ENCODE measurements at regions of chr6 and their contacts with region 1.

Region 1: GRCh38 chr6:132279592-132280139 is 121.6 kb downstream of the MOXD1 start:
- DNase-seq: peak; percentile 45 to 72 (median 65)
- H3K4me3 ChIP-seq: peak overlapping the region; percentile 54
- H3K4me3 Mint-ChIP-seq: peak overlapping the region in 6 of 7 donors; percentile 74 to 89 (median 81)
- H3K27ac ChIP-seq: no peak overlapping the region
- H3K27ac Mint-ChIP-seq: peak overlapping the region in 2 of 8 donors; percentile 31 to 58
- H3K4me1 ChIP-seq: no peaks in the 10 kb centered on the region
- H3K4me1 Mint-ChIP-seq: peaks cover 0 to 4% (median 0%) of the 10 kb centered on the region in 3 donors
- H3K27me3 ChIP-seq: no peaks in the 10 kb centered on the region
- H3K27me3 Mint-ChIP-seq: peaks cover 9 to 39% of the 10 kb centered on the region in 2 donors

Region 2: GRCh38 chr6:132259070-132259469 is 20.6 kb before region 1 on chr6:
- CTCF ChIA-PET with region 1: interaction called, 12 read pairs
- POLR2A ChIA-PET with region 1: no interaction called
- DNase-seq: no peak
- H3K4me3 ChIP-seq: no peak overlapping the region
- H3K4me3 Mint-ChIP-seq: no peak overlapping the region
- H3K27ac ChIP-seq: no peak overlapping the region
- H3K27ac Mint-ChIP-seq: no peak overlapping the region
- H3K4me1 ChIP-seq: no peaks in the 10 kb centered on the region
- H3K4me1 Mint-ChIP-seq: no peaks in the 10 kb centered on the region
- H3K27me3 ChIP-seq: no peaks in the 10 kb centered on the region
- H3K27me3 Mint-ChIP-seq: peaks cover 6 to 27% of the 10 kb centered on the region in 2 donors

Region 3: DNA sequence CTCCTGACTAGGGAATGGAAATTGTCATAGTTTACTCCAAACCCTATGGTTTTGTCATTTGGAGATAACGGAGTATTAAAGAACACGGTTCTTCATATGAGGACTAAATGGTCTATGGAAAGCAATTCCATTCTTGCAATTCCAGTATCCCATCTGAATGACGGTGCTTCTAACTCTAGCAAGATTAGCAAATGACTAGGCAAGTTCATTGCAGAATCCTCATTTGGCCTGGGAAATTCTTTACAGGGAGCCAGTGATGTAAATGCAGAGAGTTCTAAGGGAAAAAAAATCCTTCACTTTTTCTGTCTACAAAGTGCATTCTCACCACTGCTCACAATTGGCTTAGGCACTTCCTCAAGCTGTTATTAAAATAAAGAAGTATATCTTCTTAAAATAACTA is 10.1 kb after region 1 on chr6:
- CTCF ChIA-PET with region 1: interaction called, 40 read pairs
- POLR2A ChIA-PET with region 1: no interaction called
- DNase-seq: no peak
- H3K4me3 ChIP-seq: no peak overlapping the region
- H3K4me3 Mint-ChIP-seq: no peak overlapping the region
- H3K27ac ChIP-seq: no peak overlapping the region
- H3K27ac Mint-ChIP-seq: no peak overlapping the region
- H3K4me1 ChIP-seq: no peaks in the 10 kb centered on the region
- H3K4me1 Mint-ChIP-seq: no peaks in the 10 kb centered on the region
- H3K27me3 ChIP-seq: peaks cover 4% of the 10 kb centered on the region
- H3K27me3 Mint-ChIP-seq: peaks cover 2 to 21% of the 10 kb centered on the region in 2 donors

Region 4: DNA sequence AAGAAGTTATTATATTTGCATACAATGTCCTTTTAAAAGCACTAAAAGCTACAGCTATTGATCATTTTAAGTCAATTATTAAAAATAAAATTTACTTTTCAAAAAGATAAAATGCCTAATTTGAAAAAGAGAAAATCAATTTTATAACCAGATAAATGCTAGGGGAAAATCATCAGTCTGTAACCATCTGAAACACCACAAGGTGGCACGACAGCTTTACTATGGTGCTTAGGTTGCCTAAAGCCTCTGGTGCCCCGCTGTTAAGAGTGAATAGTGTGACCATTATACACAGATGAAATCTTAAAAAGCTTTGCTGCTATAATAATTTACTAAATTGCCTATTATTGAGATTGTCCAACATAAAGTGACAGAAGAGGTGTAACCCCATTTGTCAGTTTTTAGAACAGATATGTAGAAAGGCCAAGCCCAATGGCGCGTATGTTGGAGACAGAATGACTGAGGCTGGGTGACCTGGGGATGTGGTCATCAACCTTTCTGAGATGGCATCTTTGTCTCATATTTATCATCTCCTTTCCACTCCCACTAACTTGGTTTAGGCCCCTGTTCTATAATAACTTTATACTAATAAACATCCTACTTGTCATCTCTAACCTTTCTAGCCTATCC is 20.8 kb after region 1 on chr6:
- CTCF ChIA-PET with region 1: interaction called, 40 read pairs
- POLR2A ChIA-PET with region 1: no interaction called
- DNase-seq: no peak
- H3K4me3 ChIP-seq: no peak overlapping the region
- H3K4me3 Mint-ChIP-seq: no peak overlapping the region
- H3K27ac ChIP-seq: no peak overlapping the region
- H3K27ac Mint-ChIP-seq: no peak overlapping the region
- H3K4me1 ChIP-seq: no peaks in the 10 kb centered on the region
- H3K4me1 Mint-ChIP-seq: no peaks in the 10 kb centered on the region
- H3K27me3 ChIP-seq: no peaks in the 10 kb centered on the region
- H3K27me3 Mint-ChIP-seq: peaks cover 3 to 18% of the 10 kb centered on the region in 2 donors

Region 5: DNA sequence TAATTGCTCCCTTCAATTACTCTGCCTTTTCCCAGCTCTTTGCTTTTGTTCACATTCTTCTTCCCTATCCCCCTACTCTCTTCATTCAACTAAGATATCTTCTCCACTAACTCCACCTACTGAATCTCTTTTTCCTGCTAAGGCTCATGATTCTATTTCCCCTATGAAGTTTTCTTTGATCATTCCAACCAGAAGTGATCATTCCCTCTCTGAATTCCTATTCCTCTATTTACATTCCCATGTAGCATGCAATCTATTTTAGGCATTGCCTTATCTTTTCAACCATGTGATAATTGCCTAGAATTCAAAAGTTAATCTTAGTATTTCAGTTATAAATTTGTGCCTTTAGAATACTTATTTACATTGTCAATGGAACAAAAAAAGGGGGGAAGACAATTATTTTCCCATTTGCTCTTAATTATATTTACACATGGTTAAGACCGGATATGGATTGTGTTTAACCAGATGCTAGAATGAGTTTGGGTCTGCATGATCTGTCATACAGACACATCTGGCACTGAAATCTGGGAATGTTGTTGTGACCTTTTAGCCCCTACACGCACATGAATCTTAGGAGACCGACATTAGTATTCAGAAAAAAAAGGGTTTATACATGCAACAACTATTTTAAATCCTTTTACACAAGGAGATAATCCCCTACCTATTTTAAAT is 100.8 kb after region 1 on chr6:
- CTCF ChIA-PET with region 1: no interaction called
- POLR2A ChIA-PET with region 1: no interaction called
- DNase-seq: no peak
- H3K4me3 ChIP-seq: no peak overlapping the region
- H3K4me3 Mint-ChIP-seq: no peak overlapping the region
- H3K27ac ChIP-seq: no peak overlapping the region
- H3K27ac Mint-ChIP-seq: no peak overlapping the region
- H3K4me1 ChIP-seq: no peaks in the 10 kb centered on the region
- H3K4me1 Mint-ChIP-seq: no peaks in the 10 kb centered on the region
- H3K27me3 ChIP-seq: no peaks in the 10 kb centered on the region
- H3K27me3 Mint-ChIP-seq: peaks cover 15 to 43% of the 10 kb centered on the region in 2 donors

Region 6: DNA sequence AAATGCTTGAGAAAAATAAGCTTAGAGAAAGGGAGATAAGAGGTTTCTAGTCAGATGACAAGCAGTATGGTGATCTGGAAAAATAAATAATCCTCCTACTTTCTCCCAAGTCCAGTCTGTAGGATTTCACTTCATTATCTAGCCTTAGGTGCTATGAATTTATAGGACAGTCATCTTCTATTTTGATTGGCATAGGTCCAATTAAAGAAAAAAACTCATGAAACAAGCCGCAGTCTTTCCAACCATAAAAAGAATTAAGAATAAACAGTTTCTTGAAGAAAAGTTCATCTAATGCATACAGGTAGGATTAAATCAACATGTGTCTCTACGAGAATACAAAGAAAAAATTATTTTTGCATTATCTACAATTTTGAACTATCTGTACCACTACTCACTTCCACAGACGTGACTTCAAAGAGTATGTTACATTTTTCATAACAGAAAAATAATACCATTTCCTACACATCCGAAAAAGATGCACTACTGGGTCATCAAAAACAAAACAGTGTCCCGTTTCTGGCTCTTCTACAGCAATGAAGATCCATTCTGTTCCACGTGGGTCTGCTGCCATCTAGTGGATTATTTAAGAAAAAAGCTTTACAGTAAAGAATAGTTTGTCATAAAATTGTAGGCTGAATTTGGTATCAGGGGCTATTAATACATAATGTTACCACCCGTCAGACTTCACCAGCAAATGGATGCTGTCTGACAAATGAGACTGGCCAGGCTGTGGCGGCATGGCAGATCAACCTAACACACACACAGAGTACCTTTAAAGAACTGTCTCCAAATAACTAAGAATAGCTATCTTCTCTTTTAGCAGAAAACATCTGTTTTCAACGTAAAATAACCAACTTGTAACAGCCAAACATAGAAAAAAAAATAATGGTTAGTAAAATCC is 204.4 kb after region 1 on chr6:
- CTCF ChIA-PET with region 1: interaction called, 83 read pairs
- POLR2A ChIA-PET with region 1: no interaction called
- DNase-seq: peak in 4 of 5 donors; percentile 25 to 57 (median 50)
- H3K4me3 ChIP-seq: no peak overlapping the region
- H3K4me3 Mint-ChIP-seq: no peak overlapping the region
- H3K27ac ChIP-seq: no peak overlapping the region
- H3K27ac Mint-ChIP-seq: peak overlapping the region in 1 of 8 donors; percentile 8
- H3K4me1 ChIP-seq: no peaks in the 10 kb centered on the region
- H3K4me1 Mint-ChIP-seq: peaks cover 8 to 30% (median 24%) of the 10 kb centered on the region in 3 donors
- H3K27me3 ChIP-seq: no peaks in the 10 kb centered on the region
- H3K27me3 Mint-ChIP-seq: peaks cover 0 to 1% of the 10 kb centered on the region in 2 donors